Right lobe of liver (tissue), 6 donors: ENCODE measurements at regions of chr17 and their contacts with region 1.

Region 1: GRCh38 chr17:43400943-43401692 is 2.3 kb downstream of the ARL4D start:
- DNase-seq: peak in 1 of 3 donors; percentile 66
- ATAC-seq: peak in 3 of 4 donors; percentile 26 to 63 (median 34)
- H3K4me3 ChIP-seq: peak overlapping the region in 2 of 3 donors; percentile 80 to 91
- H3K27ac ChIP-seq: peak overlapping the region in 2 of 3 donors; percentile 30 to 63
- H3K4me1 ChIP-seq: peaks cover 0 to 22% (median 6%) of the 10 kb centered on the region in 4 donors
- H3K27me3 ChIP-seq: no peaks in the 10 kb centered on the region
- CTCF ChIP-seq: no peak
- POLR2A ChIP-seq: no peak

Region 2: GRCh38 chr17:43349142-43349541 is 52.0 kb before region 1 on chr17:
- intact Hi-C with region 1: no loop called
- DNase-seq: no peak
- ATAC-seq: no peak
- H3K4me3 ChIP-seq: no peak overlapping the region
- H3K27ac ChIP-seq: no peak overlapping the region
- H3K4me1 ChIP-seq: no peaks in the 10 kb centered on the region
- H3K27me3 ChIP-seq: no peaks in the 10 kb centered on the region
- CTCF ChIP-seq: no peak
- POLR2A ChIP-seq: no peak

Region 3: GRCh38 chr17:43467981-43468581 is 67.0 kb after region 1 on chr17:
- intact Hi-C with region 1: loop called in 1 of 2 experiments (anchors 10 kb)
- DNase-seq: no peak
- ATAC-seq: no peak
- H3K4me3 ChIP-seq: no peak overlapping the region
- H3K27ac ChIP-seq: no peak overlapping the region
- H3K4me1 ChIP-seq: peaks cover 0 to 10% (median 3%) of the 10 kb centered on the region in 4 donors
- H3K27me3 ChIP-seq: no peaks in the 10 kb centered on the region
- CTCF ChIP-seq: no peak
- POLR2A ChIP-seq: no peak